Endothelial cell of umbilical vein (primary cell): ENCODE measurements at regions of chr6 and their contacts with region 1.

Region 1: DNA sequence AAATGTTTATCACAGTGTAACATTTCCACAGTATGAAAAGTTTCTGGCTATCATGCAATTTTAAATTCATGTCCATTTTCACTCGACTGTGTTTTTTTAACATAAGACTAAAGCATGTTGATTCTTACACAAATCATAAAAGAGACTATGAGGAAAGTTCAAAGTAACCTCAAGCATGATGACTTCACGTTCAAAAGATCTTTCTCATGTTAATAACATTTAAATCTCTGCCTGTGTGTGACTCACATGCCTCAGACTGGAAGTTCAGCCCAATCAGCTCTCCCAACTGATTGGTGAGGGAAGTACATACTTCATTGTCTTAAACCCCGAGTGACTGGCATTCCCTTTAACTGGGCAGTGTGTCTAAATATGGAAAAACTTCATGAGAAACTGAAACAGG is 37.4 kb downstream of the ATXN1 start:
- DNase-seq: peak; percentile 93
- H3K4me3 ChIP-seq: no peak overlapping the region
- H3K27ac ChIP-seq: peak overlapping the region; percentile 83
- H3K4me1 ChIP-seq: peaks cover 64% of the 10 kb centered on the region
- H3K27me3 ChIP-seq: no peaks in the 10 kb centered on the region
- CTCF ChIP-seq: no peak
- POLR2A ChIP-seq: no peak

Region 2: GRCh38 chr6:16739329-16739801 is 15.5 kb after region 1 on chr6:
- CTCF ChIA-PET with region 1: interaction called, 44 read pairs
- POLR2A ChIA-PET with region 1: interaction called, 9 read pairs
- dilution Hi-C with region 1: no loop called
- intact Hi-C with region 1: loop called (anchors 1 kb)
- DNase-seq: no peak
- H3K4me3 ChIP-seq: no peak overlapping the region
- H3K27ac ChIP-seq: no peak overlapping the region
- H3K4me1 ChIP-seq: peaks cover 29% of the 10 kb centered on the region
- H3K27me3 ChIP-seq: no peaks in the 10 kb centered on the region
- CTCF ChIP-seq: no peak
- POLR2A ChIP-seq: no peak

Region 3: DNA sequence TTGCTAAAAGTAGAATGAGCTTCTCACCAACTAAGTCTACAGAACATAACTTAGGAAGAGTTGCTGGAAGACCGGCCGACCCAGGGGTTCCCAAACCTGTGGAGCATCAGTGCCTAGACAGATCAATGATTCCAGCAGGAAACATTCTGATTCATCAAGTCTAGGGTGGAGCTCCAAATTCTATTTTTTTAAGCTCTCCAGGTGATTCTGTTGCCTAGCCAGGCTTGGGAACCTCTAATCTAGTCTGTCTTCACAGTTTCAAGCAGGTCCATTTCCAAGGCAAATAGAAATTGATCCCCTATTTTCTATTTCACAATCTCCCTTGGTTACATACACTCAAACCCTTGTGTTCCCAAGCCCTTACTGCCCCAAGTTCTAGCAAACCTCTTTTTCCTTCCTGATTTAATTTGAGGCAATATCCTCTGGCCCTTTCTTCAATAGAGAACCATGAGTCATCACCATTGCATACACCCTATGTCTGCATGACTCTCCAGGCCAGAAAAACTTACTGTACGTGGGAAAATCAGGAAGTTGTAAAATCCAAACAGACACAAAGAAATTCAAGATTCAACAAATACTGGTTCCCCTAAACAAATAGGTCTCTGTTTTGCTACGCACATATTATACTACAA is 28.5 kb after region 1 on chr6:
- CTCF ChIA-PET with region 1: interaction called, 7 read pairs
- POLR2A ChIA-PET with region 1: no interaction called
- dilution Hi-C with region 1: no loop called
- intact Hi-C with region 1: loop called (anchors 1 kb)
- DNase-seq: peak; percentile 91
- H3K4me3 ChIP-seq: no peak overlapping the region
- H3K27ac ChIP-seq: peak overlapping the region; percentile 48
- H3K4me1 ChIP-seq: peaks cover 17% of the 10 kb centered on the region
- H3K27me3 ChIP-seq: no peaks in the 10 kb centered on the region
- CTCF ChIP-seq: no peak
- POLR2A ChIP-seq: no peak